Esophagus muscularis mucosa (tissue), 4 donors: ENCODE measurements at regions of chr2 and their contacts with region 1.

Region 1: GRCh38 chr2:238263204-238264071 is 23.6 kb upstream of the HES6 start:
- DNase-seq: peak; percentile 98
- H3K4me3 ChIP-seq: no peak overlapping the region
- H3K27ac ChIP-seq: peak overlapping the region; percentile 51 to 63 (median 58)
- H3K4me1 ChIP-seq: peaks cover 23 to 33% (median 25%) of the 10 kb centered on the region in 4 donors
- H3K27me3 ChIP-seq: no peaks in the 10 kb centered on the region
- CTCF ChIP-seq: peak; percentile 77 to 90 (median 79)
- EP300 ChIP-seq: no peak
- POLR2A ChIP-seq: no peak

Region 2: DNA sequence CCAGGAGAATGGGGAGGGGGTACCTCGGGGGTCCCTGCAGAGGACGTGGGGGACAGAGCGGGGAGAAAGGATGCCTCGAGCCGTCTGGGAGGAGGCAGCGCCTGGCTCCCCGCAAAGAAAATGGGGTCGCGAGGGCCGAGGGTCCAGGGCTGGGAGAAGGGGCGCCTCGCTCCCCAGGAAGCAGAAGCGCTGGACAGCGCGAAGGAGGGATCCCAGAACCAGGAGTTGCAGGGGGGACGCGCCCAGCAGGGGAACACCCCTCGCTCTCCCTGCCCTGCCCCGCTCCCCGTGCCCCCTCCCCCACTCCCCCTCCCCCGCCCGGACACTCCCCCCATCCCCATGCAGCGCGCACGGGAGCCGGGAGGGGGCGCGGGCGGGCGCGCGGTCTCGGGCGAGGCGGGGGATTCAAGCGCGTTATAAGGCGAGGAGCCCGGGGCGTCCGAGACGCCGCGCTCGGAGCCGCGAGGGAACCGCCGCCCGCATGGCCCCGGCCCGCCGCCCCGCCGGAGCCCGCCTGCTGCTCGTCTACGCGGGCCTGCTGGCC is 104.8 kb before region 1 on chr2 and contains the start of gene ERFE:
- intact Hi-C with region 1: loop called (anchors 5 kb)
- DNase-seq: no peak
- H3K4me3 ChIP-seq: peak within 1 kb of the TSS; percentile 40 to 58 (median 46)
- H3K27ac ChIP-seq: no peak within 1 kb of the TSS
- H3K4me1 ChIP-seq: peaks cover 11 to 37% (median 27%) of the 10 kb centered on the region in 4 donors
- H3K27me3 ChIP-seq: peaks cover 0 to 58% (median 20%) of the 10 kb centered on the region in 4 donors
- CTCF ChIP-seq: peak in 2 of 3 experiments; percentile 41 to 67
- EP300 ChIP-seq: no peak
- POLR2A ChIP-seq: no peak
- total RNA-seq, gene ERFE: 0.39 to 0.66 TPM in 2 of 4 donors, not detected in the others

Region 3: GRCh38 chr2:238169048-238169707 is 94.3 kb before region 1 on chr2:
- intact Hi-C with region 1: no loop called
- DNase-seq: no peak
- H3K4me3 ChIP-seq: no peak overlapping the region
- H3K27ac ChIP-seq: peak overlapping the region; percentile 68 to 81 (median 69)
- H3K4me1 ChIP-seq: peaks cover 19 to 34% (median 27%) of the 10 kb centered on the region in 4 donors
- H3K27me3 ChIP-seq: peaks cover 0 to 7% (median under 1%) of the 10 kb centered on the region in 4 donors
- CTCF ChIP-seq: no peak
- EP300 ChIP-seq: no peak
- POLR2A ChIP-seq: no peak

Region 4: GRCh38 chr2:238203094-238203972 is 60.1 kb before region 1 on chr2 and contains the start of gene ILKAP:
- intact Hi-C with region 1: loop called (anchors 10 kb)
- DNase-seq: no peak
- H3K4me3 ChIP-seq: peak within 1 kb of the TSS; percentile 85 to 97 (median 91)
- H3K27ac ChIP-seq: peak within 1 kb of the TSS; percentile 92 to 100 (median 96)
- H3K4me1 ChIP-seq: peaks cover 27 to 49% (median 48%) of the 10 kb centered on the region in 4 donors
- H3K27me3 ChIP-seq: no peaks in the 10 kb centered on the region
- CTCF ChIP-seq: no peak
- EP300 ChIP-seq: no peak
- POLR2A ChIP-seq: peak; percentile 18
- total RNA-seq, gene ILKAP: 27.3 to 36.0 (median 34.3) TPM

Region 5: DNA sequence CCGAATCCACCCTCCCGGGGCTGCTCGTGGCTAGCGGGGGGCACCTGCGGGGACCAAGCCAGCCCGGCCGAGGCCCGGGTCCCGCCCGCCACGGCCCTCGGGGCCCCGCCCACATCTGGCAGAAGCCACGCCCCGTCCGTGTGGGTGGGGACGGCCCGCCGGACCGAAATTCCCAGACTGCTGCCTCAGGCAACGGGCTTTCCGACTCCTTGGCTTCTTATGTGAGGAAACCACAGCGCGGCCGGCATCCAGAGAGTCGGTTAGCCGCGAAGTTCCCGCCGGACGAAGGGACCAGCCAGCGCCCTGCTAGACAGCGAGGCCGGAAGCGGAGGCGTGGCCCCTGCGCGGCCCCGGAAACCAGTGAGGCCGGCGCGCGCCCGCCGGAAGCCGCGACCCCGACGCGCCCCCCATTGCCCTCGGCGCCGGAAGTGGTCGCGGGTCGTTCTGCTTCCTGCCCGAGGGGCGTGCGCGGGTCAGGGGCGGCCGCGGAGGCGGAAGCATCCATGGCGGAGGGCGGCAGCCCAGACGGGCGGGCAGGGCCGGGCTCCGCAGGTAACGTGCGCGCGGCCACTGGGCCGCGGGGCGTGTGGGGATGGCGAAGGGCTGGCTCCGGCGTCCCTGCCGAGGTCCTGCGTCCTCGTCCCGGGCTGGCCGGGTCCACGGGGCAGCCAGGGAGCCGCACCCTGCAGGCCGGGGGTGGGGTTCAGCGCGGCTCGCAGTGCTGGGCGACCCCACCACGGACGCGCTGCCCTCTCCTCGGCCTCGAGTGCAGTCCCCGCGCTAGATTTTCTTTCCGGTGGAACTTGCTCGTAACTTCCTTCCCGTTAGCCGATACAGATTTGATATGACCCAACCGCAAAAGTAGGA is 163.4 kb after region 1 on chr2 and contains the start of gene ASB1:
- intact Hi-C with region 1: no loop called
- DNase-seq: peak; percentile 94
- H3K4me3 ChIP-seq: peak within 1 kb of the TSS; percentile 72 to 94 (median 84)
- H3K27ac ChIP-seq: peak within 1 kb of the TSS; percentile 84 to 96 (median 86)
- H3K4me1 ChIP-seq: peaks cover 17 to 45% (median 33%) of the 10 kb centered on the region in 4 donors
- H3K27me3 ChIP-seq: no peaks in the 10 kb centered on the region
- CTCF ChIP-seq: no peak
- EP300 ChIP-seq: no peak
- POLR2A ChIP-seq: peak; percentile 13
- total RNA-seq, gene ASB1: 19.9 to 42.1 (median 33.9) TPM